ENCODE measurements at regions of chr6 and their contacts with region 1.

Region 1: GRCh38 chr6:142474531-142475289 is 172.9 kb downstream of the ADGRG6 start:
- DNase-seq: peak in 7 of 9 donors; percentile 13 to 57 (median 48)
- ATAC-seq: peak; percentile 67
- H3K4me3 ChIP-seq: no peak overlapping the region
- H3K4me3 Mint-ChIP-seq: no peak overlapping the region
- H3K27ac ChIP-seq: no peak overlapping the region
- H3K27ac Mint-ChIP-seq: peak overlapping the region in 3 of 9 donors; percentile 10 to 48 (median 24)
- H3K4me1 ChIP-seq: no peaks in the 10 kb centered on the region
- H3K4me1 Mint-ChIP-seq: peaks cover 0 to 12% (median 6%) of the 10 kb centered on the region in 7 donors
- H3K27me3 ChIP-seq: no peaks in the 10 kb centered on the region
- H3K27me3 Mint-ChIP-seq: peaks cover 0 to 5% (median 0%) of the 10 kb centered on the region in 5 donors

Region 2: DNA sequence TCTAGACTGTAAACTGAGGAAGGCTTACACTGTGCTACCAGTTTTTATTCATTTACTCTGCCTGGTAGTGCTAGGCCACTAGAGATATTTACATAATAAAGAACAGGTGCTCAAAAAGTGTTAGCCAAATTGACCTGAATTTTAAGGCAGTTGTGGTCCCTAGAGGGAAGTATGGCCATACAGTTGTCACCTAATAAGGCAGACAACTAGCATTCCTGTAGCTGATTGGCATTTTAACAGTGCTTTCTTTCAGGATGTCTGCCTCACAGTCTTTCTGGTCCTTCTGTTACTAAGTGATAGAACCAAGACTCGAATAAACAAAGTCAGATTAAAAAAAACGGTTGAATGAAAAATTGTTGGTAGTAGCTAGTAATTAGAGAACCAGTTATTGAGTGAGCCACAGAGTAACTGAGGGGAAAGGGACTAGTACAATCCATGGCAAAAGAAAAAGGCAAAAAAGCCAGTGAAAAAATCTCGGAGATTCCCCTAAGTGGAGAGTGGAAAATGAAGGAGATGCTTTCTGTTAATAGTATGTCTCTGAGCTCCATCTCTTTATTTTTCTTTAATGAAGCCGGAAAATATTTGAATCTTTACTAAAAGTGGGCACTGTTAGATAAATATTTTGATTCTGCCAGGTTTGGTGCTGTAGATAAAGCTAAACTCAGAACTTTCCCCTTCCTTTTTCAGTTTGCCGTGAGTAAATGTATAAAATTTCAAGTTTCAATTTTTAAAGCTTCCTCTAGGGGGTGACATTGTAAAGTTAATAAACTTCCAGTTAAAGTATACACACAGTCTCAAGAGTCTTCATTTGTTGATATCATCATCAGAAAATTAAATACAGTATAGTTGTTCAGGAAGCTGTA is 318.6 kb before region 1 on chr6:
- CTCF ChIA-PET with region 1: interaction called, 3 read pairs
- POLR2A ChIA-PET with region 1: no interaction called
- intact Hi-C with region 1: loop called in 1 of 2 experiments (anchors 5 kb)
- DNase-seq: peak in 6 of 9 donors; percentile 8 to 51 (median 39)
- ATAC-seq: peak; percentile 80
- H3K4me3 ChIP-seq: no peak overlapping the region
- H3K4me3 Mint-ChIP-seq: peak overlapping the region in 9 of 10 donors; percentile 1 to 59 (median 20)
- H3K27ac ChIP-seq: peak overlapping the region; percentile 18
- H3K27ac Mint-ChIP-seq: peak overlapping the region; percentile 19 to 89 (median 46)
- H3K4me1 ChIP-seq: peaks cover 0 to 6% of the 10 kb centered on the region in 2 donors
- H3K4me1 Mint-ChIP-seq: peaks cover 26 to 79% (median 64%) of the 10 kb centered on the region in 7 donors
- H3K27me3 ChIP-seq: no peaks in the 10 kb centered on the region
- H3K27me3 Mint-ChIP-seq: no peaks in the 10 kb centered on the region

Region 3: DNA sequence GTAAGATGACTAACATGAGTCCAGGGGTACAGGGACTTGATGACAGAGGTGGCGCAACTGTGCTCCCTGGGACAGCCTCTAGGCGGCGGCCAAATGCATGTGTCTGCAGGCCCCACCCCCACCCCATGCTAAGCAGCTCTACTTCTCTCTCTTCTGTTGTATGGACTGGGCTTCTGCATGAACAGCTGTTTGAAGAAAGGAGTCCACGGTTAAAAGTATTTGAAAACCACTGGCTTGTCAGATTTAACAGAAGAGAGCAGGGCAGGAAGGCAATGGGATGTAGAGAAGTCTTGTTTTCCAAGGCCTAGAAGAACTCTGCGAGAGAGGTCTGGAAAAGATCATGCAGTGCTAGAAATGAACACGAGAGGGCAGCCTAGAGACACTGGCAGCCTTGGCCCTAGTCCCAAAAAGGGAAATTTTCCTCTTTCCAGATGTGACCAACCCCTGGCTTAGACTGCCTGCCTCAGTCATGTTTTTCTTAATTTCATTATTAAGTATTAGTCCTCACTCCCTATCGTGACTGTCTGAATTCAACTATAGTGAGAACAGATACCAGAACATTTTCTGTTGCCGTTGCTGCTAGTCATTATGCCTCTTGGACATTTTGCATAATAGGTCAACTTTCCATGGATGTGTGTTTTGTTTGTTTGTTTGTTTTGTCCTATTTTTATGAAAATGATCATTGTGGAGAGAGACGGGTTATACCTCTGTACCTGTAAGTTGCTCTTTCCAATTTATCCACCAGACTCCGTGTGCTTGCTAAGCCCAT is 92.1 kb after region 1 on chr6:
- CTCF ChIA-PET with region 1: interaction called, 4 read pairs
- POLR2A ChIA-PET with region 1: no interaction called
- intact Hi-C with region 1: loop called (anchors 1 to 2 kb)
- DNase-seq: peak in 8 of 9 donors; percentile 17 to 69 (median 54)
- ATAC-seq: peak; percentile 81
- H3K4me3 ChIP-seq: no peak overlapping the region
- H3K4me3 Mint-ChIP-seq: peak overlapping the region in 7 of 10 donors; percentile 8 to 78 (median 51)
- H3K27ac ChIP-seq: no peak overlapping the region
- H3K27ac Mint-ChIP-seq: peak overlapping the region in 8 of 9 donors; percentile 51 to 92 (median 76)
- H3K4me1 ChIP-seq: peaks cover 0 to 60% of the 10 kb centered on the region in 2 donors
- H3K4me1 Mint-ChIP-seq: peaks cover 19 to 85% (median 74%) of the 10 kb centered on the region in 7 donors
- H3K27me3 ChIP-seq: no peaks in the 10 kb centered on the region
- H3K27me3 Mint-ChIP-seq: no peaks in the 10 kb centered on the region

Region 4: GRCh38 chr6:142885182-142885867 is 410.6 kb after region 1 on chr6:
- CTCF ChIA-PET with region 1: interaction called, 7 read pairs
- POLR2A ChIA-PET with region 1: no interaction called
- intact Hi-C with region 1: loop called in 1 of 2 experiments (anchors 2 kb)
- DNase-seq: peak; percentile 28 to 91 (median 83)
- ATAC-seq: peak; percentile 92
- H3K4me3 ChIP-seq: peak overlapping the region; percentile 44
- H3K4me3 Mint-ChIP-seq: peak overlapping the region; percentile 78 to 98 (median 94)
- H3K27ac ChIP-seq: peak overlapping the region; percentile 84
- H3K27ac Mint-ChIP-seq: peak overlapping the region; percentile 76 to 100 (median 99)
- H3K4me1 ChIP-seq: peaks cover 52 to 62% of the 10 kb centered on the region in 2 donors
- H3K4me1 Mint-ChIP-seq: peaks cover 45 to 99% (median 94%) of the 10 kb centered on the region in 7 donors
- H3K27me3 ChIP-seq: no peaks in the 10 kb centered on the region
- H3K27me3 Mint-ChIP-seq: no peaks in the 10 kb centered on the region

Region 5: GRCh38 chr6:143112084-143112768 is 637.5 kb after region 1 on chr6:
- CTCF ChIA-PET with region 1: no interaction called
- POLR2A ChIA-PET with region 1: no interaction called
- intact Hi-C with region 1: no loop called
- DNase-seq: no peak
- ATAC-seq: no peak
- H3K4me3 ChIP-seq: no peak overlapping the region
- H3K4me3 Mint-ChIP-seq: no peak overlapping the region
- H3K27ac ChIP-seq: no peak overlapping the region
- H3K27ac Mint-ChIP-seq: no peak overlapping the region
- H3K4me1 ChIP-seq: no peaks in the 10 kb centered on the region
- H3K4me1 Mint-ChIP-seq: peaks cover 0 to 15% (median 0%) of the 10 kb centered on the region in 7 donors
- H3K27me3 ChIP-seq: no peaks in the 10 kb centered on the region
- H3K27me3 Mint-ChIP-seq: no peaks in the 10 kb centered on the region

Region 6: DNA sequence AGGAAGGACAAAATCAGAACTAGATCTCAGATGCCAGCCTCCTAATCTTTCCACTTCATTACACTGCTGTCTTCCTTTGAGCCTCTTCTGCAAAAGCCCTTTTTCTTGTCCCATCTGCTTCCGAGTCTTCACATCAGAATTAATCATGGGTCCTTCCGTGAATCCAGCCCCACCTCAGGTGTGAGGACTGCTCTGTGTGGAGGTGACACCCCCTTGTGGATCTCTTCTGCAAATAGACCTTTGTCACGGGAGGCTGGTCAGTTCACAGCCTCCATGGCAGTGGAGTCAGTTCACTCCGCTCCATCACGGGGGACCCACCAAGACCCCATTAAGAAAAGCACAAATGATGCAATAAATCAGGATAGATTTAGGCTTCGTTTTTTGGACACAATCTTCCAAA is 804.7 kb after region 1 on chr6:
- CTCF ChIA-PET with region 1: interaction called, 7 read pairs
- POLR2A ChIA-PET with region 1: no interaction called
- intact Hi-C with region 1: loop called in 1 of 2 experiments (anchors 1 kb)
- DNase-seq: peak in 3 of 9 donors; percentile 1 to 7 (median 2)
- ATAC-seq: peak; percentile 40
- H3K4me3 ChIP-seq: no peak overlapping the region
- H3K4me3 Mint-ChIP-seq: no peak overlapping the region
- H3K27ac ChIP-seq: no peak overlapping the region
- H3K27ac Mint-ChIP-seq: no peak overlapping the region
- H3K4me1 ChIP-seq: no peaks in the 10 kb centered on the region
- H3K4me1 Mint-ChIP-seq: peaks cover 0 to 12% (median 0%) of the 10 kb centered on the region in 7 donors
- H3K27me3 ChIP-seq: no peaks in the 10 kb centered on the region
- H3K27me3 Mint-ChIP-seq: no peaks in the 10 kb centered on the region

Region 7: DNA sequence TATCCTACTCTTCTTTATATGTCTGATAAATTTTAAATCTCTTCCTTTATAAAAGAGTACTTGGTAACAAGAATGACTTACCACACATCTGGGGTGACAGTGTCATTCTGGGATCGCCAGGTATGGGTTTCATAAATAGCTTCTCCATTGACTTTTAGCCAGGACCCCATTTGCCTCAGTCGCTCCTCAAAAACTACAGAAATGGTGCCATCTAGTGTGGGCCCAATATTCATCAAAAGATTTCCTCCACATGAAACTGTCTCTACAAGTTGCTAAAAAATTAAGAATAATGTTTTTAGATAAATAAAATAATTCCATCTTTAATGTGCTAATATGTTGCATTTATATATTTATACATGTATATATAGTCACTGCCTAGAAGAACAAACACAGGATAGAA is 1027.1 kb after region 1 on chr6:
- CTCF ChIA-PET with region 1: interaction called, 7 read pairs
- POLR2A ChIA-PET with region 1: no interaction called
- intact Hi-C with region 1: loop called in 1 of 2 experiments (anchors 2 kb)
- DNase-seq: no peak
- ATAC-seq: no peak
- H3K4me3 ChIP-seq: no peak overlapping the region
- H3K4me3 Mint-ChIP-seq: no peak overlapping the region
- H3K27ac ChIP-seq: no peak overlapping the region
- H3K27ac Mint-ChIP-seq: no peak overlapping the region
- H3K4me1 ChIP-seq: peaks cover 0 to 8% of the 10 kb centered on the region in 2 donors
- H3K4me1 Mint-ChIP-seq: peaks cover 17 to 25% (median 18%) of the 10 kb centered on the region in 7 donors
- H3K27me3 ChIP-seq: no peaks in the 10 kb centered on the region
- H3K27me3 Mint-ChIP-seq: no peaks in the 10 kb centered on the region

Region 8: GRCh38 chr6:144013486-144013909 is 1538.8 kb after region 1 on chr6:
- CTCF ChIA-PET with region 1: interaction called, 9 read pairs
- POLR2A ChIA-PET with region 1: no interaction called
- intact Hi-C with region 1: loop called (anchors 1 to 5 kb)
- DNase-seq: peak; percentile 18 to 58 (median 45)
- ATAC-seq: peak; percentile 54
- H3K4me3 ChIP-seq: no peak overlapping the region
- H3K4me3 Mint-ChIP-seq: no peak overlapping the region
- H3K27ac ChIP-seq: no peak overlapping the region
- H3K27ac Mint-ChIP-seq: peak overlapping the region in 1 of 9 donors; percentile 9
- H3K4me1 ChIP-seq: no peaks in the 10 kb centered on the region
- H3K4me1 Mint-ChIP-seq: peaks cover 0 to 4% (median 0%) of the 10 kb centered on the region in 7 donors
- H3K27me3 ChIP-seq: peaks cover 0 to 6% of the 10 kb centered on the region in 2 donors
- H3K27me3 Mint-ChIP-seq: peaks cover 11 to 45% (median 28%) of the 10 kb centered on the region in 5 donors